ENCODE measurements at regions of chr12 and their contacts with region 1.

Region 1: GRCh38 chr12:67441736-67442346 is 172.7 kb downstream of the CAND1 start:
- DNase-seq: peak; percentile 90
- H3K4me3 Mint-ChIP-seq: no peak overlapping the region
- H3K27ac Mint-ChIP-seq: no peak overlapping the region
- H3K4me1 Mint-ChIP-seq: peaks cover 6% of the 10 kb centered on the region
- H3K27me3 Mint-ChIP-seq: no peaks in the 10 kb centered on the region
- CTCF ChIP-seq: peak; percentile 78

Region 2: GRCh38 chr12:67515679-67516340 is 74.0 kb after region 1 on chr12:
- CTCF ChIA-PET with region 1: no interaction called
- intact Hi-C with region 1: loop called (anchors 5 kb)
- DNase-seq: peak; percentile 64
- H3K4me3 Mint-ChIP-seq: no peak overlapping the region
- H3K27ac Mint-ChIP-seq: peak overlapping the region; percentile 64
- H3K4me1 Mint-ChIP-seq: peaks cover 53% of the 10 kb centered on the region
- H3K27me3 Mint-ChIP-seq: no peaks in the 10 kb centered on the region
- CTCF ChIP-seq: no peak

Region 3: DNA sequence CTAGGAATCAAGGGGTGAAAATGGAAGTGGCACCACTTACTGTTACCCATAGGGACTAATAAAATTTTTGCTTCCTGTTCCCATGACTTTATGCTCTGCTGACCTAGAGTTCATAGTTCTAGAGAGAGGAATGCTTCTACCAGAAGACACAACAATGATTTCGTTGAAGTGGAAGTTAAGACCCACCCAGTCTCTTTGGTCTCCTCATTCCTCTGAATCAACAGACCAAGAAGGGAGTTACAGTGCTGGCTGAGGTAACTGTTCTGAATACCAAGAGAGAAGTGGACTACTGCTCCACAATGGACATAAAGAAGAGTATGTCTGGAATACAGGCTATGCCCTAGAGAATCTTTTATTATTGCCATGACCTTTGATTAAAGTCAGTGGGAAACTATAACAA is 183.2 kb after region 1 on chr12:
- CTCF ChIA-PET with region 1: no interaction called
- intact Hi-C with region 1: loop called (anchors 5 kb)
- DNase-seq: no peak
- H3K4me3 Mint-ChIP-seq: no peak overlapping the region
- H3K27ac Mint-ChIP-seq: no peak overlapping the region
- H3K4me1 Mint-ChIP-seq: no peaks in the 10 kb centered on the region
- H3K27me3 Mint-ChIP-seq: no peaks in the 10 kb centered on the region
- CTCF ChIP-seq: no peak

Region 4: GRCh38 chr12:67943226-67943892 is 501.5 kb after region 1 on chr12:
- CTCF ChIA-PET with region 1: interaction called, 3 read pairs
- intact Hi-C with region 1: loop called (anchors 5 kb)
- DNase-seq: peak; percentile 72
- H3K4me3 Mint-ChIP-seq: no peak overlapping the region
- H3K27ac Mint-ChIP-seq: peak overlapping the region; percentile 10
- H3K4me1 Mint-ChIP-seq: peaks cover 39% of the 10 kb centered on the region
- H3K27me3 Mint-ChIP-seq: no peaks in the 10 kb centered on the region
- CTCF ChIP-seq: peak; percentile 35

Region 5: GRCh38 chr12:67981287-67982162 is 539.7 kb after region 1 on chr12:
- CTCF ChIA-PET with region 1: no interaction called
- intact Hi-C with region 1: no loop called
- DNase-seq: no peak
- H3K4me3 Mint-ChIP-seq: no peak overlapping the region
- H3K27ac Mint-ChIP-seq: no peak overlapping the region
- H3K4me1 Mint-ChIP-seq: no peaks in the 10 kb centered on the region
- H3K27me3 Mint-ChIP-seq: peaks cover 14% of the 10 kb centered on the region
- CTCF ChIP-seq: no peak